Mammary epithelial cell (primary cell): ENCODE measurements at regions of chr1 and their contacts with region 1.

Region 1: DNA sequence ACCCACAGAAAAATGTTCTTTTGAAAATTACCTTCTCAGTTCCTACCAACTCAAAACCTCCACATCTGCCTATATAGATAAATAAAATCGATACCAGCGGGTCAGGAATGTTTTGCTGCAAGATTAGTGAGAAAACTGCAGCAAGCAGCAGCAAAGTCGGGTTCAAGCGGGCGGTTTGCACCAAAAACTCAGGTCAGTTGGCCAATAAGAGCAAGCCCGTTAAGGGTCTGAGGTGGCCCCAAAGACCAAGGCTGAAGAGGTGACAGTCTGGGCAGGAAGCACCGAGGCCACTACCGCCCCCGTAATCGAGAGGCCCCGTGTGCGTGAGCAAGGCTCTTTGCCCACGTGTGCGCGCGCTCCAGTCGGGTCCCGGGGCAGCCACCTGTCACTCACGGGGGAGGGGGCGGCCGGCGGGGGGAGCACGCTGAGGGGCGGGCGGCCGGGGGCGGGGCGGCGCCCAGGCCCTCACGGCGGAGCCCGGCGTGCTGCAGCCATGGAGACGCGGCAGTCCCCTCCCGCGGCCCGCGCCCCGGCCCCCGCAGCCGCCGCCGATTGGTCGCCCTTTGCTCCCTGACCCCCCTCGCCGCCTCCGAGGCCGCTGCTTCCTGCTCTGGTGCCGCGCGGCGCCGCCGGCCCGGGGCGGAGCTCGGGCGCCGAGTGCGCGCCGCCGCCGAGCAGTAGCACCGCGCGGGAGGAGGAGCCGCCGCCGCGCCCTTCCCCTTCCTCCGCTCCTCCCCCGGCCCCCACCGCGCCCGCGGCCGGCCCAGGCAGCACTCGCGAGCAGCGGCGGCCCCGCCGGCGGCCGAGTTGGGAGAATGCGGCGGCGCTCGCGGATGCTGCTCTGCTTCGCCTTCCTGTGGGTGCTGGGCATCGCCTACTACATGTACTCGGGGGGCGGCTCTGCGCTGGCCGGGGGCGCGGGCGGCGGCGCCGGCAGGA is at the start of gene GALNT2:
- DNase-seq: peak; percentile 85
- H3K4me3 ChIP-seq: peak within 1 kb of the TSS; percentile 82 to 85 (median 83)
- H3K27ac ChIP-seq: peak within 1 kb of the TSS; percentile 71
- H3K4me1 ChIP-seq: peaks cover 26% of the 10 kb centered on the region
- H3K27me3 ChIP-seq: no peaks in the 10 kb centered on the region
- CTCF ChIP-seq: no peak
- total RNA-seq, gene GALNT2: 117 to 125 TPM

Region 2: GRCh38 chr1:229843627-229844238 is 223.0 kb before region 1 on chr1:
- CTCF ChIA-PET with region 1: no interaction called
- dilution Hi-C with region 1: no loop called
- in situ Hi-C with region 1: no loop called
- intact Hi-C with region 1: loop called (anchors 5 kb)
- DNase-seq: peak; percentile 71
- H3K4me3 ChIP-seq: no peak overlapping the region
- H3K27ac ChIP-seq: no peak overlapping the region
- H3K4me1 ChIP-seq: peaks cover 27% of the 10 kb centered on the region
- H3K27me3 ChIP-seq: peaks cover under 1% of the 10 kb centered on the region
- CTCF ChIP-seq: peak in 1 of 2 donors; percentile 43

Region 3: DNA sequence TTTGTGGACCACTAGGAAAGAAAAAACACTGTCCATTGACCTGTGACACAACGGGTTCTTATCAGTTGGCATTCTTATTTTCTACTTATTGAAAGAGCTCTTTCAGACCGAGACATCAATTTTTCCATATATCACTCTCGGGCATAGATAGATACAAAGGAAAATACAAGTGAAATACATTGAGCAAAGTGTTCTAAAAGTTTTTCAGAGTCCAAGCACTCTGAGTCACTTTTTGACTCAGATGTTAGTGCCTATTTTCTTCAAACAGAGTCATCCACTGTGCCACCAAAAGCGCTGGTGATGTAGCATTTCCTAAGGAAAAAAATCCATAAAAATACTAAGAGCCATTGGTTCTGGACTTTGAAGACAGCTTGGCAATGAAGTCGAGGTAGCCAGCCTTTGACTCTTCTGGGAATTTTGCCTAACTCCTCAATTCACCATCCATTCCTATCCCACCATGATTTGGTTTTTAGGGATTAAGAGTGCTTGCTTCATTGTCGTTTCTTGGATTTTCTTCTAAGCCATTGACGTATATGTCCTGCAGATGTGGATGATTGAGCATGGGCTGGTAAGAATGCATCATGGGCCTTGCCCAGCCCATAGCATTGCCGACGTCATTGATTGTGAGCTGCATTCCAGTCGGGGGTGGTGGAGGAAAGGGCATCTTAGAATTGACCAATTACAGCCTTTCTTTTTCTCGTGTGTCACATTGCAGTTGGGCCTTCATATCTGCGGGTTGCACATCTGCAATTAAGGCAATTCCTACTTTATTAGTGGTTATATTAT is 10.9 kb after region 1 on chr1:
- CTCF ChIA-PET with region 1: no interaction called
- dilution Hi-C with region 1: no loop called
- in situ Hi-C with region 1: no loop called
- intact Hi-C with region 1: loop called (anchors 1 kb)
- DNase-seq: no peak
- H3K4me3 ChIP-seq: no peak overlapping the region
- H3K27ac ChIP-seq: peak overlapping the region; percentile 25
- H3K4me1 ChIP-seq: peaks cover 30% of the 10 kb centered on the region
- H3K27me3 ChIP-seq: no peaks in the 10 kb centered on the region
- CTCF ChIP-seq: no peak

Region 4: GRCh38 chr1:230104395-230105244 is 37.9 kb after region 1 on chr1:
- CTCF ChIA-PET with region 1: no interaction called
- dilution Hi-C with region 1: no loop called
- in situ Hi-C with region 1: no loop called
- intact Hi-C with region 1: loop called (anchors 1 kb)
- DNase-seq: peak; percentile 99
- H3K4me3 ChIP-seq: peak overlapping the region in 1 of 3 experiments; percentile 12
- H3K27ac ChIP-seq: peak overlapping the region; percentile 75
- H3K4me1 ChIP-seq: peaks cover 36% of the 10 kb centered on the region
- H3K27me3 ChIP-seq: no peaks in the 10 kb centered on the region
- CTCF ChIP-seq: no peak